Natural killer cell (primary cell): ENCODE measurements at regions of chr9 and their contacts with region 1.

Region 1: GRCh38 chr9:93064392-93065134 is 6.1 kb downstream of the SUSD3 start:
- DNase-seq: peak; percentile 82 to 95
- ATAC-seq: peak; percentile 91 to 97 (median 95)
- H3K4me3 ChIP-seq: peak overlapping the region; percentile 6
- H3K4me3 Mint-ChIP-seq: peak overlapping the region; percentile 83
- H3K27ac ChIP-seq: peak overlapping the region; percentile 59
- H3K27ac Mint-ChIP-seq: peak overlapping the region; percentile 87 to 92
- H3K4me1 ChIP-seq: peaks cover 65% of the 10 kb centered on the region
- H3K4me1 Mint-ChIP-seq: peaks cover 46 to 59% of the 10 kb centered on the region in 2 donors
- H3K27me3 ChIP-seq: peaks cover 27% of the 10 kb centered on the region
- H3K27me3 Mint-ChIP-seq: peaks cover 71 to 74% of the 10 kb centered on the region in 2 donors
- CTCF ChIP-seq: no peak

Region 2: DNA sequence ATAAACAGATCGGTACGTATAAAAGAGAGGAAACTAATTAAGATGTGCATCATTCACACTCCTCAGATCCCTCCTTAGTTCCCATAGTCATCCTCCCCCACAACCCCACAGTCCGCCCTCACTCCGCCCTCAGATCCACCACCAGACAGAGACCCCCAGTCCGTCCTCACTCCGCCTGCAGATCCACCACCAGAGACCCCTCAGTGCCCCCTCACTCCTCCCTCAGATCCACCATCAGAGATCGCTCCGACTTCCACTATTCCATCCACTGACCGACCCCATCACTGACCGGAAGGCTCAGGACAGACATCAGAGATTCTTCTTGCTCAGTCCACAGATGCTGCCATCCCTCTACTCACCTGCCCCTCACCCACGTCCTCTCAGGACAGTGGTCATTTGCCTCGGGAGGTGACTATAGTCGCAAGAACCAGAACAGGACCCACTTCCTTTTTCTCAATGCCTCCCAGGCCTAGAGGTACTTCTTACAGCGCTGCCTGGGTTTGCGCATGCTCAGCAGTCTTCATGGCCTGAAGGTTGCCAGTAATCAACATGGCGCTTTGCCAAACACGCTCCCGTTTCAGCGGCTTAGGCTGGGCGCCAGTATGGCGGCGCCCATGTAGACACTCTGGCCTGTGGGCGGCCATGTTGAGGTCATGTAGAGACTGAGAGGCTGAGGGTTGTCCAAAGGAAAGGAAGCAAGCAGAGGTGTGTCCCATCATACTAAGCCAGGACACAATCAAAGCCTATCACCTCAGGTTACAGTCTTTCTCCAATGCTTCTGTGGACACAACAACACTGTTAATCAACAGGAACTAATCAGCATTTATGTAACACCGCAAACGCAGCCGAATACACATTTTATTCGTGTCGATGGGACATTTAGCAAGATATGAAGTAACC is 186.8 kb before region 1 on chr9 and contains the start of gene ZNF484:
- intact Hi-C with region 1: loop called (anchors 10 kb)
- DNase-seq: peak; percentile 92 to 100
- ATAC-seq: peak; percentile 97 to 100 (median 99)
- H3K4me3 ChIP-seq: peak within 1 kb of the TSS; percentile 71
- H3K4me3 Mint-ChIP-seq: peak within 1 kb of the TSS; percentile 99
- H3K27ac ChIP-seq: peak within 1 kb of the TSS; percentile 87
- H3K27ac Mint-ChIP-seq: peak within 1 kb of the TSS; percentile 97 to 100
- H3K4me1 ChIP-seq: peaks cover 7% of the 10 kb centered on the region
- H3K4me1 Mint-ChIP-seq: peaks cover 30 to 49% of the 10 kb centered on the region in 2 donors
- H3K27me3 ChIP-seq: no peaks in the 10 kb centered on the region
- H3K27me3 Mint-ChIP-seq: no peaks in the 10 kb centered on the region
- CTCF ChIP-seq: no peak
- total RNA-seq, gene ZNF484: 14.1 to 19.5 (median 16.2) TPM

Region 3: DNA sequence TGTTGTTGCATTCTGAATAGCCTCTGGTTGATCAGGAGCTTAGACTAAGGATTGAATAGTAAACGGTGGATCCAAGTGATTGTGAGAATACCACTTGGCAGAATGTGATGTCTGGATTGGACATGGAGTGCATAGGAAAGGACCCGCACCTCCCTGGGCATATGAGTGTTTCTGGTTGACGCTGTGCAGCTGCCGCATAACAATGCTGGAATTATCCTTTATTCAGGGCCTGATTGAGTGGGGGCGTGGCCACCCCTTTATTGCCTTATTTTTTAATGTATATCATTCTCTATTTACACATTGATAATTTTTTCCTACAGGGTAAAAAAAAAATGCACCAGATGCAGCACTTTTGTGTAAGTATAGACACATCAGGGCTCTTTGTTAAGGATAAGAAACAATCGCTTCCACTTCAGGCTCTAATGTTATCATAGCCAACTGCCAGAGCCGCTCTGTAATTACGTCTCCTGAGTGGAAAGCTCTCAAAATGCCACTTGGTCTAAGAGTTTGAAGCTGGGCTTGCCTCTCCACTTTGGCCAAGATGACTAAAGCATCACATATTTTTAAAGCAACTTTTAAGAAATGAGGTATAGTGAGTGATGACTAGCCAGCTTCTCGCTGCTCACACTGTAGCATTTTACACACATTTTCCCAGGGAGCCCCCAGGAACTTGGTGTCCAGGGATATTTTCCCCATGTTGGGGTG is 111.5 kb before region 1 on chr9:
- intact Hi-C with region 1: no loop called
- DNase-seq: no peak
- ATAC-seq: no peak
- H3K4me3 ChIP-seq: no peak overlapping the region
- H3K4me3 Mint-ChIP-seq: peak overlapping the region; percentile 10
- H3K27ac ChIP-seq: no peak overlapping the region
- H3K27ac Mint-ChIP-seq: no peak overlapping the region
- H3K4me1 ChIP-seq: peaks cover 48% of the 10 kb centered on the region
- H3K4me1 Mint-ChIP-seq: peaks cover 25 to 26% of the 10 kb centered on the region in 2 donors
- H3K27me3 ChIP-seq: peaks cover 2% of the 10 kb centered on the region
- H3K27me3 Mint-ChIP-seq: peaks cover 0 to 5% of the 10 kb centered on the region in 2 donors
- CTCF ChIP-seq: no peak

Region 4: DNA sequence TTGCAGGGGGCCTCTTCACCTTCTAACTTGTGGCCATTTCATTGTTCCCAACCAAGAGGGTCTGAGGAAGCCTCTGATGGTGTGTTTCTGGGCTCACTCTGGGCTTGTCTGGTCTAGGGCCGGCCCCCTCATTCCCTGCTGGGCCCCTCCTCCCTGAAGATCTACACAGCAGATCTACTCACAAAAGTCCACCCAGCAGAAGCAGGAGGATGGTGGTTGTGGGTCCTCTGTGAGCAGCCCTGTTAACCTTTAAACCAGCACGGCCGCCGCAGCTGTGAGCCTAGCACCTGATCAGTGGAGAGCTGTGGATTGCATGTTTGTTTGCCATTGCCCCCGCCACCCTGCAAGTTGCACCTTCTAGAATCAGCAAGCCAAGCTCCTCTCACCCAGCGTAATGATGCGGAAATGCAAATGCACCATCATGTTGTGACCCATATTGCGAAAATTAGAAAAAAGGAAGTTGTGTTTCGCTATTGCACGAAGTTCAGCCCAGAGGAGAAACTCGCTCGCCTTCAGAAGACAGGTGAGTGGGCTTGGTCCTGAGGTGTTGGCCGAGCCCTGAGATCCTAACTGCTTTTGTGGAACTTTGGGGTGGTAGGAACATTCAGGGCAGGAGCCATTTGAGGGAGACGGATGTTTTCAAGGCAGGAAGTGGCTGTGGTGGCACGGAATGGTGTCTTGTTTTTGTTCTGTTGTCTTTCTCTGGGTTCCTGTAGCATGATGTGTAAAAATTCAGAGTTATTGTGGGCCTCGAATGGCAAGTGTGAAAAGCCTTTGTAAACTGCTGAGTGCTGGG is 100.5 kb before region 1 on chr9:
- intact Hi-C with region 1: loop called (anchors 1 kb)
- DNase-seq: peak; percentile 78 to 91
- ATAC-seq: peak; percentile 72 to 87 (median 78)
- H3K4me3 ChIP-seq: peak overlapping the region; percentile 65
- H3K4me3 Mint-ChIP-seq: peak overlapping the region; percentile 95
- H3K27ac ChIP-seq: peak overlapping the region; percentile 93
- H3K27ac Mint-ChIP-seq: peak overlapping the region; percentile 97
- H3K4me1 ChIP-seq: peaks cover 87% of the 10 kb centered on the region
- H3K4me1 Mint-ChIP-seq: peaks cover 76 to 83% of the 10 kb centered on the region in 2 donors
- H3K27me3 ChIP-seq: no peaks in the 10 kb centered on the region
- H3K27me3 Mint-ChIP-seq: no peaks in the 10 kb centered on the region
- CTCF ChIP-seq: no peak

Region 5: DNA sequence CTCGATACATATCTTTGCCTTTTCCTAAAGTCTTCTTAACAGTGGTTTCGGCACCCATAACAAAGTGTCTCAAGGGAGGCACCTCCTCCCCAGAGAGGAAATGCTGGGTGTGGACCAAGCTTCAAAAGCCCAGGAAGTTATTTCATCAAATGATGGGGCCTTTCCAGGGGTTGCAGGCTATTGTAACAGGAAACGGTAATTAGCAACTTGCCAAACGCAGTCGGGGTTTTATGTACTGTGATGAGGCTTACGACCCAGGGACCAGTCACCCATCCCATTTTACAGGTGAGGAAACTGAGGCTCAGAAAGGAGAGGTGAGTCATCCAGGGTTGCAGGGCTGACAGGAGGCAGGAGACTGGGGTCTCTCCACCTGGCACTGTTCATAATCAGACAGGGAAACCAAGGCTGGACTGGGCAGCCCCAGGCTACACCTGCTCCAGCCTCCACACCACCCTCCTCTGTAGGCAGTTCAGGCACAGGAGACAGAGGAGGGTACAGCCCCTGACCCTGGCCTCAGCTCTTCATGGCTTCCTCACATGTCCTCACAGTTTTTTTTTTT is 36.0 kb before region 1 on chr9:
- intact Hi-C with region 1: loop called (anchors 5 kb)
- DNase-seq: peak in 1 of 2 donors; percentile 92
- ATAC-seq: peak; percentile 88 to 90 (median 88)
- H3K4me3 ChIP-seq: peak overlapping the region; percentile 2
- H3K4me3 Mint-ChIP-seq: peak overlapping the region; percentile 89
- H3K27ac ChIP-seq: peak overlapping the region; percentile 73
- H3K27ac Mint-ChIP-seq: peak overlapping the region; percentile 91 to 97
- H3K4me1 ChIP-seq: peaks cover 81% of the 10 kb centered on the region
- H3K4me1 Mint-ChIP-seq: peaks cover 35 to 70% of the 10 kb centered on the region in 2 donors
- H3K27me3 ChIP-seq: no peaks in the 10 kb centered on the region
- H3K27me3 Mint-ChIP-seq: no peaks in the 10 kb centered on the region
- CTCF ChIP-seq: no peak

Region 6: DNA sequence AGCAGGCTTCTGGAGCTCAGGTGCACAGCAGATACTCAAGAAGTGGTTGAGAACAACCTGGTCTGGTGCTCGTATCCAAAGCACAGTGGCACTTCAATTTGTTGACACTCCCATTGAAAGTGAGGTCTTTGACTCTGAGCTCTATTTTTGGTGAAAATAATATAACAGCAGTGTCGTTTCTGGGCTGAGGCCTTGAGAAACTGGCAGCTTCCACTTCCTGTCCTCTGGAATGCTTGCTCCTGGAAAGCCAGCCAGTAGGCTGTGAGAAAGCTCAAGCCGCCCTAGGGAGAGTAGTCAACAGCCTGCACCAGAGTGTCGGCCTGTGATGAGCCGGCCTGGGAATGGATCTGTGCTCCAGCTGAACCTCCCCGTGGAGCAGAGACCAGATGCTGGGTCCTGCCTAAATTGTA is 12.9 kb before region 1 on chr9:
- intact Hi-C with region 1: no loop called
- DNase-seq: no peak
- ATAC-seq: no peak
- H3K4me3 ChIP-seq: no peak overlapping the region
- H3K4me3 Mint-ChIP-seq: no peak overlapping the region
- H3K27ac ChIP-seq: no peak overlapping the region
- H3K27ac Mint-ChIP-seq: no peak overlapping the region
- H3K4me1 ChIP-seq: peaks cover 20% of the 10 kb centered on the region
- H3K4me1 Mint-ChIP-seq: peaks cover 0 to 28% of the 10 kb centered on the region in 2 donors
- H3K27me3 ChIP-seq: no peaks in the 10 kb centered on the region
- H3K27me3 Mint-ChIP-seq: peaks cover 16 to 21% of the 10 kb centered on the region in 2 donors
- CTCF ChIP-seq: no peak

Region 7: DNA sequence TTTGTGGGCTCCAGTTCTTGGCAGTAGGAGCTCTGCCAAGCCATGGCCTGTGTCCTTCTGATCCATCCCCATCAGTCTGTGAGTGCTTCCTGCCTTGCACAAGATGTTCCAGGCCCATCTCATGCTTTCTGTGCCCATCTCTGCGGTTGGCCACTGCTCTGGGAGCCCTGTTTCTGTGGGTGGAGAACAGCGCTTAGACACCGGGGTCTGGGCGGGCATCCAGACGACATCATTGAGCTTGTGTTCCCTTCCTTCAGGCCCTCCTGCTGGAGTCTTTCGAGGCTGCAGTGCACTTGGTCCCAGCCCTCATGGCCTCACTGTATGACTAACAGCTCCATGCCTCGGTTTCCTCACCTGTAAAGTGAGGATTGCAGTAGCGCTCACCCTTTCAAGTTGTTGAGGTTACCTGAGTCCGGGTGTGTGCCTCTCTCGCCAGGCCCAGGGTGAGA is 16.5 kb after region 1 on chr9:
- intact Hi-C with region 1: no loop called
- DNase-seq: no peak
- ATAC-seq: no peak
- H3K4me3 ChIP-seq: no peak overlapping the region
- H3K4me3 Mint-ChIP-seq: no peak overlapping the region
- H3K27ac ChIP-seq: no peak overlapping the region
- H3K27ac Mint-ChIP-seq: no peak overlapping the region
- H3K4me1 ChIP-seq: peaks cover 26% of the 10 kb centered on the region
- H3K4me1 Mint-ChIP-seq: peaks cover 5 to 8% of the 10 kb centered on the region in 2 donors
- H3K27me3 ChIP-seq: peaks cover 6% of the 10 kb centered on the region
- H3K27me3 Mint-ChIP-seq: peaks cover 38 to 47% of the 10 kb centered on the region in 2 donors
- CTCF ChIP-seq: no peak

Region 8: DNA sequence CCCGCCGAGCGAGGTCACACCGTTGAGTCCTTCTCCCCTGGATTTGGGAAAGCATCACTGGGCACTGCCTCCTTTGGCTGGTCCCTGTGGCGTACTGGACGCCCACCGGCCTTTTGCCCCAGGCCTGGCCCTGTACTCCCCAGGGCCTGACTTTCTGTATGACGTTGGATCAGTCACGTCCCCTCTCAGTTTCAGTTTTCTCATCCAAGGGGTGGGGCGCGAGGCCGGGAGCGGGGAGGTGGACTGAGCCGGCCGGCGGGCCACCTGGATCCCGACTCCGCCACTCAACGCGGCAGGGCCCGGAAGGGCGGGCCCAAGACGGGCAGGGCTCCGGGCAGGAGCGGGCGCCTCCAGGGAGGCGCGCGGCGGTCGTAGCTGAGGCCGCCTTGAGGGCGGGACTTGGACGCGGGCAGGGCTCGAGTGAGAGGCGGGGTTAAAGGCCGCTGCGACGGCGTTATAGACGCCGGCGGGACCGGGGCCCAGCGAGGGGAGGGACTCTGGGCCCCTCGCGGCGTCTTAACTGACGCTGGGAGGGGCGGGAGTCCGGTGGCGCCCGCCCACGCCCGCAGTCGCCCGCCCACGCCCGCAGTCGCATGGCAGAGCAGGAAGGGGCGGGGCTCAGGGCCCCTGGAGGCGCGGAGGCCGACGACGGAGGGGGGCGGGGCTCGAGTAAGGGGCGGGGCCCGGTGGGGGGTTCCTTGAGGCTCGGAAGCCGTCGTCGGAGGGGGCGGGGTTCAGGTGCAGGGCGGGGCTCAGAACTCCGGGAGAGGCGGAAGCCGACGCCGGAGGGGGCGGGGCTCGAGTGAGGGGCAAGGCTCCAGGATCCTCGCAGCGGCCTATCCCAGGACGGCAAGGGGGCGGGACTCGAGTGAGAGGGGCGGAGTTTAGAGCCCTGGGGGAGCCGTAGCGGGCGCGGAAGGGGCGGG is 30.9 kb after region 1 on chr9:
- intact Hi-C with region 1: loop called (anchors 1 kb)
- DNase-seq: peak; percentile 100
- ATAC-seq: peak; percentile 82 to 93 (median 84)
- H3K4me3 ChIP-seq: peak overlapping the region; percentile 63
- H3K4me3 Mint-ChIP-seq: peak overlapping the region; percentile 85
- H3K27ac ChIP-seq: peak overlapping the region; percentile 98
- H3K27ac Mint-ChIP-seq: peak overlapping the region; percentile 91 to 92
- H3K4me1 ChIP-seq: peaks cover 73% of the 10 kb centered on the region
- H3K4me1 Mint-ChIP-seq: peaks cover 28 to 51% of the 10 kb centered on the region in 2 donors
- H3K27me3 ChIP-seq: no peaks in the 10 kb centered on the region
- H3K27me3 Mint-ChIP-seq: no peaks in the 10 kb centered on the region
- CTCF ChIP-seq: no peak

Region 9: DNA sequence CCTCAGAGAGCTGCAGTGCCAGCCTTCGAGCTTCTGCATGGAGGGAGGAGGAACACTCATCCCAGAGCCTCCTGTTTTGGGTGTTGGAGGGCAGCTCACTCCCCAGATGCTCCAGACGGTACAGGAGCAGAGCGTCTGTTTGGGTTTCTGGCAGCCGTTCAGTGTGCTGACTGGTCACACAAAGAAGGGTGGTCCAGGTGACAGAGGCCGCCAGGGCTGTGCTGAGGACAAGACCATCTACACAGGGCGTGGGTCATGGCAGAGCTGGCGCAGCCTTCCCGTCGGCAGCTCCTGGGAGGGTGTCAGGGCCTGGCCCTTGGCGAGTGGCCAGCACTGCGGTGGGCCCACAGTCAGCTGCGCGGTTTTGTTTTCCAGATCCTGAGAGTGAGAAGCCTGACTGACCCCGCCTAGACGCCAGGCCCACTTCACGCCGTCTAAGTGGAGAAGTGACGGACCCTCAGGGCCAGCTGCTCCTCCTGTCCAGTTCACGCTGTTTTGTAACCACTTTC is 255.5 kb after region 1 on chr9:
- intact Hi-C with region 1: loop called (anchors 2 kb)
- DNase-seq: no peak
- ATAC-seq: no peak
- H3K4me3 ChIP-seq: no peak overlapping the region
- H3K4me3 Mint-ChIP-seq: no peak overlapping the region
- H3K27ac ChIP-seq: no peak overlapping the region
- H3K27ac Mint-ChIP-seq: no peak overlapping the region
- H3K4me1 ChIP-seq: peaks cover 25% of the 10 kb centered on the region
- H3K4me1 Mint-ChIP-seq: peaks cover 20 to 21% of the 10 kb centered on the region in 2 donors
- H3K27me3 ChIP-seq: peaks cover 33% of the 10 kb centered on the region
- H3K27me3 Mint-ChIP-seq: peaks cover 40 to 54% of the 10 kb centered on the region in 2 donors
- CTCF ChIP-seq: no peak